PC-9 (cell line): ENCODE measurements at regions of chr22 and their contacts with region 1.

Region 1: DNA sequence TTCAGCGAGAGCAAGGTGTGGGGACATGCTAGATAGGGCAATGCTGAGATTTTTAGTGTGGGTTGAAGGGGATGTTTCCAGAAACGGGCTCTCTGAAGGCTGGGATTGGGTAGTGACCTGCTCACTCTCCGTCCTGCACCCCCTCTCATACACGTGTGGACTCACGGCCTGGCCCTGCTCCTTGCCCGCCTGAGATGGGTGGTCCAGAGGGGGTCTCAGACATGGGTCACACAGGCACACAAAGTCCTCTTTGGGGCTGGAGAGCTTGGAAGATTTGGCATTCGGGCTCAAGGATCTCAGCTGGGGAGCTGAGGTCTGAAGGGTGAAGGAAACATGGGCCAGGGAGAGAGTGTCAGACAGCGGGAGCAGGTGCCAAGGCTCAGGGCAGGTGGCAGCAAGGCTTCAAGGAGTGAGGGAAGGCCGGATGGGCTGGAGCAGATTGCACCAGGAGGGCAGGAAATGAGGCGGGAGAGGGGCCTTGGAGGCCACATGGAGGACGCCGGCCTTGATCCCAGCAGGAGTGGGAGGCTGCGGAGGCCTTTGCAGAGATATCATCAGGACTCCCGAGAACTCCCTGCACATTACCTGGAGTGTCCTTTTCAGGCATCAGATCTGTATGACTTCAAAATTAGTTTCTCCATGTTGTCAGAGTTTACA is 74.1 kb downstream of the PARVB start:
- DNase-seq: no peak
- H3K4me3 ChIP-seq: no peak overlapping the region
- H3K27ac ChIP-seq: no peak overlapping the region
- H3K4me1 ChIP-seq: no peaks in the 10 kb centered on the region
- H3K27me3 ChIP-seq: no peaks in the 10 kb centered on the region
- CTCF ChIP-seq: no peak

Region 2: DNA sequence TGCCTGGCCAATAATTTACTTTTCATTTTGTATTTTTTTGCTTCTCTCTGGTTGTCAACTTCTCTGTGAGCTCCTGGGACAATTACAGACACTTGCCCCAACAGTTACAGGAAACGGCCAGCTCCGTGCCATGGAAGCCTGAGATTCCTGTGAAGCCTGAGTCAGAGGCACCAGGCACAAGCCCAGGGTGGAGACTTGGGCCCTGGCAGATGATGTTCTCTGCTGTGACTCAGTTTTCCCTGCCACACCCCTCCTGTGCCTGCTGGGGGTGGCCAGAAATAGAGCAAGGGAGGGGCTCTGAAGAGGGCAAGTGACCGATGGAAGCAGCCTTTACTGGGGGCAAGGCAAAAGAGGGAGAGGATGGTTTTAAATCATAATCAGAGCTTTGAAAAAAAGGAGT is 1462.7 kb before region 1 on chr22:
- CTCF ChIA-PET with region 1: interaction called, 13 read pairs
- POLR2A ChIA-PET with region 1: no interaction called
- intact Hi-C with region 1: no loop called
- DNase-seq: peak; percentile 82 to 85
- H3K4me3 ChIP-seq: no peak overlapping the region
- H3K27ac ChIP-seq: peak overlapping the region; percentile 90
- H3K4me1 ChIP-seq: peaks cover 19% of the 10 kb centered on the region
- H3K27me3 ChIP-seq: no peaks in the 10 kb centered on the region
- CTCF ChIP-seq: no peak

Region 3: DNA sequence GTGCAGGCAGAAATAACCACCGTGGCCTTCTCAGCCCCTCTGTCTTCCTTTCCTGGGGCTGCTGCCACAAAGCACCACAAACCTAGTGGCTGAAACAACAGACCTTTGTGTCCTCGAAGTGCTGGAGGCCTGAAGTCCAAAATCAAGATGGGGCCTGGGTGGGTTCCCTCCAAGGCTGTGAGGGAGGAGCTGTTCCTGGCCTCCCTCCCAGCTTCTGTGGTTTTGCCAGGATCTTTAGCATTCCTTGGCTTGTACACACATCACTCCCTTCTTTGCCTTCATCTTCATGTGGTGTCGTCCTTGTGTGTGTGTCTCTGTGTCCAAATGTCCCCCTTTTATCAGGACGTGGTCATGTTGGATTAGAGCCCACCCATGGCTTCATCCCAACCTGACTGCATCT is 53.5 kb after region 1 on chr22:
- CTCF ChIA-PET with region 1: no interaction called
- POLR2A ChIA-PET with region 1: no interaction called
- intact Hi-C with region 1: no loop called
- DNase-seq: no peak
- H3K4me3 ChIP-seq: no peak overlapping the region
- H3K27ac ChIP-seq: no peak overlapping the region
- H3K4me1 ChIP-seq: no peaks in the 10 kb centered on the region
- H3K27me3 ChIP-seq: no peaks in the 10 kb centered on the region
- CTCF ChIP-seq: no peak